ENCODE measurements at regions of chr11 and their contacts with region 1.

Region 1: GRCh38 chr11:236774-237767 is at the start of gene PSMD13:
- ATAC-seq: peak; percentile 87 to 92 (median 90)
- H3K4me3 ChIP-seq: peak within 1 kb of the TSS; percentile 78 to 99 (median 91)
- H3K27ac ChIP-seq: peak within 1 kb of the TSS; percentile 89 to 97
- H3K4me1 ChIP-seq: peaks cover 10 to 14% of the 10 kb centered on the region in 2 donors
- total RNA-seq, gene PSMD13: 106 to 155 (median 141) TPM

Region 2: DNA sequence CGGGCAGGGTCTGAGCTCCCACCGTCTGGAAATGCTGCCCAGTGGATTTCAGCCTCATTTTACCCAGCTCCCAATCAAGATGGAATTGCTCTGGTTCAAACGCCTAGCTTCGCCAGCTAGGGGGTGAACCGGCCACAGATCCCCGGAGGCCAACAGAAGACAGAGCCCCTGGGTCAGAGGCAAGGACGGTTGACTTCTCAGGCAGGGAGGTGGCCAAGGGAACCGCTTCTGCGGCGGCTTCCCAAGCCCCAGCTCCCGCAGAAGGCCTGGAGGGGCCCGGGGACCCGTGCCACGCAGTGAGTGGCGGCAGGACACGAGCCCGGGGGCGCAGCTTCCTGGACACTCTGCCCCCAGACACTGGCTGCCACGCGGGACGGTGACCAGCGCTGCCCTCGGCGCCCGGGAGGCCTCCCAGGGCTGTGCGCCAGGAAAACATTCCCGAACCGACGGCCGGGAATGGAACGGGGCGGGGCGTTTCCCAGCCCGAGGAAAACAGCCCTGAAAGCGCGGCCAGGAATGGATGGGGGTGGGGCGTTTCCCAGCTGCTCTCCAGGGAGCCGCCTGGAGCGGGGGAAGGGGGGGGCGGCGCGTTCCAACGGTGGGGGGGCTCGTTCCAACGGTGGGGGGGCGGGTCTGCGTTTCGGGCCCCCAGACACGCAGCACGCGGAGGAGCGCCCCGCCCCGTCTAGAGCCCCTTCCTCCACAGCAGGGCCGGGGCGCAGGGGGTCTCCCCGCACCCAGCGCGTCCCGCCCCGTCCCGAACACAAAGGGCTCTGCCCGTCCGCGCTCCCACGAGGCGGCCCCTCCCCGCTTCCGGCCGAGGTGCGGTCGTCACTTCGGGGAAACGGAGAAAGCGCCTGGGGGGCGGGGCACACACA is 118.7 kb after region 1 on chr11:
- in situ Hi-C with region 1: loop called in 1 of 9 experiments (anchors 10 kb)
- ATAC-seq: peak; percentile 56 to 90 (median 88)
- H3K4me3 ChIP-seq: peak overlapping the region; percentile 32 to 42 (median 41)
- H3K27ac ChIP-seq: peak overlapping the region; percentile 74 to 91
- H3K4me1 ChIP-seq: peaks cover 9 to 32% of the 10 kb centered on the region in 2 donors

Region 3: DNA sequence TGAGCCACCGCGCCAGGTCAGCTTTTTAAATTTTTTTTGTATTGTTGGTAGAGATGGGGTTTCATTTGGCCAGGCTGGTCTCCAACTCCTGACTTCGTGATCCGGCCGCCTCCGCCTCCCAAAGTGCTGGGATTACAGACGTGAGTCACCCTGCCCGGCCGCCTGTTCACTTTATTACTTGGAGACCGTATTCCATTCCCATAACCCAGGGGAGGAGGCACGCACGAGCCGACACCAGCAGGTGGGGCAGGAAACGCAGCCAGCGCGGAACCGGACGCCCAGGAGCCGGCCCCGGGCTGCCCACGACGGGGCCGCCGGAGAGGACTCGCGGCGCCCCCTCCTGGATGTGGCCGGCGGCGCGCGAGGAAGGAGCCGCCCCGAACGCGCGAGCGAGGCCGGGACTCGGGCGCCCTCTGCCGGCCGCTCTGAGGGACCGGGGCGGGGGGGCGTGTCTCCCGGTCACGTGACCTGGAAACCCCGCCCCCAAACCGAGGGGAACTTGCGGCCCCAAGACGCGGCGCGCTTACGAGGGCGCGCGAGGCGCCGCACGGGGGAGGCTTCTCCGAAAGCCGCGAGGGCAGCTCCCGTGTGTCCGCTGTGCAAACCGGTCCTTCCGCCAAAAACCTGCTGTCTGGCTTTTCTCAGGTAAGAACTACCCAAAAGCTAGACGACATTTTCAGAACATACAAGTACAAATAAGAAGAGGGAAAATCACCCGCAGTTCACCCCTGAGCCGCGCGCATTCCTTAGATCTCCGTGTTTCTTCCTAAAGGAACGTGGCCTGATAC is 281.6 kb after region 1 on chr11:
- in situ Hi-C with region 1: no loop called
- ATAC-seq: peak; percentile 50 to 98 (median 82)
- H3K4me3 ChIP-seq: no peak overlapping the region
- H3K27ac ChIP-seq: no peak overlapping the region
- H3K4me1 ChIP-seq: no peaks in the 10 kb centered on the region

Region 4: DNA sequence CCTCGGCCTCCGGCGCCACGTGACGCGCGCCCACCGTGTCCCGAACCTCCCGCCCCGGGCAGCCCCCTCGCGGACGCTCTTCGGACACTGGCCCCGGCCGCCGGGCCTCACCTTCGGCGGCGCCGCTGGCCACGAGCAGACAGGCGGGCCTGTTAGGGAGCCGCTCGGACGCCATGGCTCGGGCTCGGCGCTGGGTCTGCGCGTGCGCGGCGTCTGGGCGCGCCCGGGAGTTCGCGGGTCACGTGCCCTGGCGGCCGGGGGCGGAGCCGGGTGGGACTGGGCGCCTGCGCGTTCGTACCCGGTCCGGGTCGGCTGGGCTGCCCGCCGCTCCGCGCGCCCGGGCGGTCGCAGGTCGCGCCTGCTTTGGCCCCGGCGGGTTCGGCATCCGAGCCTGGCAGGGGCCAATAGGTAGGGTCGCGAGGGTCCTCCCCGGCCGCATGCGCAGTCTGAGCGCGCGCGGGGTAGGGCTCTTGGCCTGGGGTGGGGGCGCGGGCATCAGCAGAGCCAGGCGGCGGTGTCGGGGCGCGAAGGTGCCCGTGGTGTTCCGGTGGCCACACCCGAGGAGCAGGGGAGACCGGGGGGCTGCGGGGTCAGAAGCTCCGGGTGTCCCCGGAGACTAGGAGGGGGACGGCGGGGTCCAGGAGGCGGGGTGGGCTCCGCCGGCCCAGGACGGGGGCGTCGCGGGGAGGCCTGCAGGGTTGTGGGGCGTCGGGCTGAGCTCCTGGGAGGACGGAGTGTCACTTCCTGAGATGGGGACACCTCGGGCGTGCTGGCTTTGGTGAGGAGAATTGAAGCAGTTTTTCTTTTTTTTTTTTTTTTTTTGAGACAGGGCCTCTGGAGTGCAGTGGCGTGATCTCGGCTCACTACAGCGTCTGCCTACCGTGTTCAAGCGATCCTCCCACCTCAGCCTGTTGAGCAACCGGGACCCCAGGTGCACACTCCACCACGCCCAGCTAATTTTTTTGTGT is 540.5 kb after region 1 on chr11 and contains the start of gene GATD1:
- in situ Hi-C with region 1: no loop called
- ATAC-seq: peak; percentile 63 to 86 (median 82)
- H3K4me3 ChIP-seq: peak within 1 kb of the TSS; percentile 80 to 98 (median 97)
- H3K27ac ChIP-seq: peak within 1 kb of the TSS; percentile 89
- H3K4me1 ChIP-seq: peaks cover 16 to 17% of the 10 kb centered on the region in 2 donors
- total RNA-seq, gene GATD1: 22.8 to 70.1 (median 38.0) TPM